Caco-2 (cell line): ENCODE measurements at regions of chr20 and their contacts with region 1.

Region 1: DNA sequence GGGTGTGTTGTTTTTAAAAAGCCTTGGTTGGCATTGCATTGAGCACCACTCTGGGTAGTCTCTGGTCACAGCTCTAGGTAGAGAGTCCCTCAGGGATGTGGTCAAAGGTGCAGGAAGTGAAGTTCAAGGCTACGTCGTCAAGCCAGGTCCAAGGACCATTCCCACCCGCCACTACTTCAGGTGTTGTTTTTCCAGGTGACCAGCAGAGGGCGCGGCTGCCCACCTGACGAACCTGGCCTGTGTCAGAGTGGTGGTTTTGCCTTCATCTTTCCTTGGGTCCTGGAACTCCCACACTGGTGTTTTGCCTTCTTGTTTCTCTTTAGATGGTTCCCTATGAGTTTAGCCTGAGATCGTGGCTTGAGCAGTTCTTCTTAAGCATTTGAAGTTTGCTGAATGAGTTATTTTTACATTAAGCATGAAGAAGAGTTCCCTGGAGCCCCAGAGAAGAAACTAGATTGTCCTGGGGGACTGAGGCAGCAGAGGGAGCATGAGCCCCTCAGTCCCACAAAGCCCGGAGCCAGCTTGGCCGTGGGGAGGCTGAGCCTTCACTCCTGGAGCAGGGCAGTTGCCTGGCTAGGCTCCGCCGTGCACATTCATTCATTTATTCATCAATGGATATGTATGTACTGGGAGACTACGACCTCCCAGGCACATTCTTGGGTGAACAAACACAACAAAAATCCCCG is 5.6 kb upstream of the PHACTR3 start:
- DNase-seq: peak in 1 of 2 experiments; percentile 79
- H3K4me3 ChIP-seq: no peak overlapping the region
- H3K4me3 Mint-ChIP-seq: no peak overlapping the region
- H3K27ac Mint-ChIP-seq: no peak overlapping the region
- H3K4me1 ChIP-seq: no peaks in the 10 kb centered on the region
- H3K4me1 Mint-ChIP-seq: no peaks in the 10 kb centered on the region
- H3K27me3 ChIP-seq: peaks cover 8% of the 10 kb centered on the region
- H3K27me3 Mint-ChIP-seq: peaks cover 55% of the 10 kb centered on the region
- CTCF ChIP-seq: peak; percentile 99

Region 2: DNA sequence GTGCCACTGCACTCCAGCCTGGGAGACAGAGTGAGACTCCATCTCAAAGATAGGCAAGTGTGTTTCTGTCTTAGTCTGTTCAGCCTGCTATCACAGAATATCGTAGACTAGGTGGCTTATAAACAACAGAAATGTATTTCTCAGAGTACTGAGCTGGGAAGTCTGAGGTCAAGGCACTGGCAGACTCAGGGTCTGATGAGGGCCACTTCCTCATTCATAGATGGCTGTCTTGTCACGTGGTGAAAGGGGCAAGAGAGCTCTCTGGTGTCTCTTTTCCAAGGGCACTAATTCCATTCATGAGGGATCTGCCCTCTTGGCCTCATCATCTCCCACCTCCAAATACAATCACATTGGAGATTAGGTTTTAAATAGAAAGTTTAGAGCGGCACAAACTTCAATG is 90.0 kb before region 1 on chr20:
- CTCF ChIA-PET with region 1: no interaction called
- POLR2A ChIA-PET with region 1: no interaction called
- intact Hi-C with region 1: no loop called
- DNase-seq: no peak
- H3K4me3 ChIP-seq: no peak overlapping the region
- H3K4me3 Mint-ChIP-seq: no peak overlapping the region
- H3K27ac Mint-ChIP-seq: no peak overlapping the region
- H3K4me1 ChIP-seq: no peaks in the 10 kb centered on the region
- H3K4me1 Mint-ChIP-seq: no peaks in the 10 kb centered on the region
- H3K27me3 ChIP-seq: peaks cover 4% of the 10 kb centered on the region
- H3K27me3 Mint-ChIP-seq: peaks cover 24% of the 10 kb centered on the region
- CTCF ChIP-seq: no peak

Region 3: DNA sequence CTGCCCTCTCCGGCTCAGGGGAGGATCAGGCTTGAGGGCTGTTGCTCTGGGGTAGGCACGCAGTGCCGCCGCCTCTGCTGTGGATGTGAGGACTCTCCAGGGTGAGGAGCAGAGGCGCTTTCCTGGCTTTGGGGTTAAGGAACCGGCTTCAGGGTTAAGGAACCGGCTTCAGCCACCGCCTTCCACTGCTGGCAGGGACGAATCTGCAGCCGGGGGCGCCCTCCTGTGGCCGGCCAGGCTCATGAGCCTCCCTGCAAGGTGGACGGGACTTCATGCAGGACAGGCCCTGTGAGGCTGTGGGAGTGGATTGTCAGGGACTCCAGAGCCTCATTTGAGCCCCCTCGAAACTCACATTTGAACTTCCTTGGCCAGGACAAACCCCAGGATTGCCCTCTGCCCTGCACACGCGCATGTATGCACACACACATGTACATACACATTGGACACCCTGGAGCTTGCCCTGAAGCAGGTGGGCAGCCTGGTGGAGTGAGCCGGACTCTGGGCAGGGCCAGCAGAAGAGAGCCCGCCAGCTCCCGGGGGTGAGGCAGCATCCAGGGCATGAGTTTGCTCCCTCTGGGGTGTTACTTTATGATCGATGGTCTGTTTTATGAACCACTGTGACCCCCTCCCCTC is 152.4 kb after region 1 on chr20:
- CTCF ChIA-PET with region 1: interaction called, 6 read pairs
- POLR2A ChIA-PET with region 1: no interaction called
- intact Hi-C with region 1: loop called (anchors 1 kb)
- DNase-seq: peak; percentile 85 to 92
- H3K4me3 ChIP-seq: no peak overlapping the region
- H3K4me3 Mint-ChIP-seq: no peak overlapping the region
- H3K27ac Mint-ChIP-seq: no peak overlapping the region
- H3K4me1 ChIP-seq: no peaks in the 10 kb centered on the region
- H3K4me1 Mint-ChIP-seq: no peaks in the 10 kb centered on the region
- H3K27me3 ChIP-seq: peaks cover 10% of the 10 kb centered on the region
- H3K27me3 Mint-ChIP-seq: peaks cover 70% of the 10 kb centered on the region
- CTCF ChIP-seq: peak; percentile 99 to 100